WTC11 (cell line): ENCODE measurements at regions of chr1 and their contacts with region 1.

Region 1: DNA sequence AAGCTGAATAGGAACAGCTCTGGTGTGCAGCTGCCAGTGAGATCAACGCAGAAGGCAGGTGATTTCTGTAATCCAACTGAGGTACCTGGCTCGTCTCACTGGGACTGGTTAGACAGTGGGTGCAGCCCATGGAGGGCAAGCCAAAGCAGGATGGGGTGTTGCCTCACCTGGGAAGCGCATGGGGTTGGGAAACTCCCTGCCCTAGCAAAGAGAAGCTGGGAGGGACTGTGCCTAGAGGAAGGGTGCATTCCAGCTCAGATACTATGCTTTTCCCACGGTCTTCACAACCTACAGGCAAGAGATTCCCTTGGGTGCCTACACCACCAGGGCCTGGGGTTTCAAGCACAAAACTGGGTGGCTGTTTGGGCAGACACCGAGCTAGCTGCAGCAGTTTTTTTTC is 183.2 kb downstream of the DNM3 start:
- DNase-seq: no peak
- ATAC-seq: peak; percentile 32; the same call in 1 of the 2 replicates
- H3K4me3 Mint-ChIP-seq: no peak overlapping the region
- H3K27ac Mint-ChIP-seq: no peak overlapping the region
- H3K4me1 Mint-ChIP-seq: peaks cover 8% of the 10 kb centered on the region
- H3K27me3 Mint-ChIP-seq: no peaks in the 10 kb centered on the region
- CTCF ChIP-seq: no peak

Region 2: DNA sequence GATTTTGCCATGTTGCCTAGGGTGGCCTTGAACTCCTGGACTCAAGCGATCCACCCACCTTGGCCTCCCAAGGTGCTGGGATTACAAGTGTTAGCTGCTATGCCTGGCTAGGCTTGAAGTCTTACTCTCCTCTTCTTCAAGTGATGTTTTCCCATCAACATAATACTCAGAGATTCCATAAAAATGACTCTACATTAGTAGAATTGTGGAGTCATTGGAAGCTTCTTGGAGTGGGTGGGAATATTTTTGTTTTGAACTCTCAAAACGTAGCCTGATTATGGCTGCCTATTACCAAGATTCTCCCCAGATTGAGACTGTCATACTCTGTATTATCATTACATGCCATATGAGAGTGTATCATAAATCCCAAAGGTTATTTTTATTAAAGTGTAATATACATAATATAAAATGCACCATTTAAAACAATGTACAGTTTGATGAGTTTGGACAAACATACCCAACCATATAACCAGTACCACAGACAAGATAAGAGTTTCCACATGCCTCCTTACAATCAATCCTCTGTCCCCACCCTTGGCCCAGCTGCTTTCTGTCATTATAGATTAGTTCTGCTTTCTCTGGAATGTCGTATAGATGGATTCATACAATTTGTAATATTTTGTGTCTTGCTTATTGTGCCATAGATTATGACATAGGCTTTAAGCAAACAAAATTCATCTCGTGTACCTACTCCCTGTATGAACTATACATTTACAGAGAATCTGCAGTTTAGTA is 191.3 kb before region 1 on chr1:
- CTCF ChIA-PET with region 1: no interaction called
- POLR2A ChIA-PET with region 1: no interaction called
- DNase-seq: no peak
- ATAC-seq: no peak
- H3K4me3 Mint-ChIP-seq: no peak overlapping the region
- H3K27ac Mint-ChIP-seq: no peak overlapping the region
- H3K4me1 Mint-ChIP-seq: no peaks in the 10 kb centered on the region
- H3K27me3 Mint-ChIP-seq: no peaks in the 10 kb centered on the region; the same call in 1 of the 2 replicates
- CTCF ChIP-seq: no peak

Region 3: GRCh38 chr1:172002725-172003345 is 21.7 kb before region 1 on chr1:
- CTCF ChIA-PET with region 1: interaction called, 15 read pairs
- POLR2A ChIA-PET with region 1: no interaction called
- DNase-seq: no peak
- ATAC-seq: no peak
- H3K4me3 Mint-ChIP-seq: no peak overlapping the region
- H3K27ac Mint-ChIP-seq: no peak overlapping the region
- H3K4me1 Mint-ChIP-seq: no peaks in the 10 kb centered on the region
- H3K27me3 Mint-ChIP-seq: no peaks in the 10 kb centered on the region
- CTCF ChIP-seq: no peak